Naive thymus-derived CD8-positive, alpha-beta T cell (primary cell): ENCODE measurements at regions of chr11 and their contacts with region 1.

Region 1: DNA sequence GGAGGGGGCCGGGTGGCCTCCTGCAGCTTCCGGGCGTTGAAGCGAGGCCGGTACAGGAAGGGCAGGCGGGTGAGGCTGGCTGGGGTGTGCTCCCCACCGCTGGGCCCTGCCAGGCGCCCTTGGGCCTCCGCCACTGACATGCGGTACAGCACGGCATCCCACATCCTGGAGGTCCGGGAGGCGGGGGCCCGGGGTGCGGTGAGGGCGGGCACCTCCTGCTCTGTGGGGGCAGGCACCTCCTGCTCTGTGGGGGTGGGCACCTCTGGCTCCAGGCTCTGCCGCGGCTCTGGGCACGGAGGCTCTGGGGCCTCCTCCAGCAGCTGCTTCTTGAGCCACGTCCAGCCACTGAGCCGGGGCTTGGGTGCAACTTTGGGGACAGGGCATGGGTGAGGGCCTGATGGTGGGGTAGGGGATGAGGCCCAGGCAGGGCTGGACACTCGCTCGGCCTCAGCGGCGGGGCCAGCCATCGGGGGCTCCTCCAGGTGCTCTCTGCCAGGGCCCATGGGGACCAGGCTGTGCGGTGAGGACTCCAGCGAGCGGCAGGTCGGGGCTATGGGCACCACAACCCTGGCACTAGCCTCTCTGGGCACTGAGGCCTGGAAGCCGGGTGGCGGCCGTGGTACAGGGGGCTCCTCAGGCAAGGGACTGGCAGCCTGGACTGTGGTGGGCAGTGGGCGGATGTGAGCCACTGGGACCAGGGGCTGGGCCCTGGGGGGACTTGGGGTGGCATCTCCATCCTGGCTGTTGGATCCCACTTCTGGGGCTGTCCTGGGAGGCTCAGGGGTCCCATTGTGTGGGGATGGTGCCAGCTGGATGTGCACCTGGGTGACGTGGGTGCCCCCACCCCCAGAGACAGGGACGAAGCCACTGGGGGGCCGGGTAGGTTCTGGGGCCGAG is 2.2 kb downstream of the PRR33 start:
- DNase-seq: peak; percentile 67 to 92 (median 85)
- ATAC-seq: peak; percentile 82 to 95
- H3K4me3 Mint-ChIP-seq: peak overlapping the region; percentile 73 to 93 (median 82)
- H3K27ac Mint-ChIP-seq: peak overlapping the region; percentile 70 to 94 (median 90)
- H3K4me1 Mint-ChIP-seq: peaks cover 31 to 54% (median 52%) of the 10 kb centered on the region in 4 donors
- H3K27me3 Mint-ChIP-seq: no peaks in the 10 kb centered on the region

Region 2: GRCh38 chr11:1876361-1877063 is 13.0 kb before region 1 on chr11:
- POLR2A ChIA-PET with region 1: interaction called, 20 read pairs
- DNase-seq: peak in 1 of 10 donors; percentile 59
- ATAC-seq: no peak
- H3K4me3 Mint-ChIP-seq: no peak overlapping the region
- H3K27ac Mint-ChIP-seq: peak overlapping the region in 2 of 10 donors; percentile 43 to 68
- H3K4me1 Mint-ChIP-seq: peaks cover 18 to 65% (median 47%) of the 10 kb centered on the region in 4 donors
- H3K27me3 Mint-ChIP-seq: no peaks in the 10 kb centered on the region

Region 3: GRCh38 chr11:1917671-1918516 is 28.4 kb after region 1 on chr11:
- POLR2A ChIA-PET with region 1: interaction called, 109 read pairs
- DNase-seq: peak in 2 of 10 donors; percentile 8 to 23
- ATAC-seq: peak; percentile 29 to 46
- H3K4me3 Mint-ChIP-seq: peak overlapping the region in 1 of 10 donors; percentile 34
- H3K27ac Mint-ChIP-seq: no peak overlapping the region
- H3K4me1 Mint-ChIP-seq: peaks cover 16 to 48% (median 29%) of the 10 kb centered on the region in 4 donors
- H3K27me3 Mint-ChIP-seq: peaks cover 2 to 16% (median 5%) of the 10 kb centered on the region in 5 donors